H1 (cell line): ENCODE measurements at regions of chr1 and their contacts with region 1.

Region 1: DNA sequence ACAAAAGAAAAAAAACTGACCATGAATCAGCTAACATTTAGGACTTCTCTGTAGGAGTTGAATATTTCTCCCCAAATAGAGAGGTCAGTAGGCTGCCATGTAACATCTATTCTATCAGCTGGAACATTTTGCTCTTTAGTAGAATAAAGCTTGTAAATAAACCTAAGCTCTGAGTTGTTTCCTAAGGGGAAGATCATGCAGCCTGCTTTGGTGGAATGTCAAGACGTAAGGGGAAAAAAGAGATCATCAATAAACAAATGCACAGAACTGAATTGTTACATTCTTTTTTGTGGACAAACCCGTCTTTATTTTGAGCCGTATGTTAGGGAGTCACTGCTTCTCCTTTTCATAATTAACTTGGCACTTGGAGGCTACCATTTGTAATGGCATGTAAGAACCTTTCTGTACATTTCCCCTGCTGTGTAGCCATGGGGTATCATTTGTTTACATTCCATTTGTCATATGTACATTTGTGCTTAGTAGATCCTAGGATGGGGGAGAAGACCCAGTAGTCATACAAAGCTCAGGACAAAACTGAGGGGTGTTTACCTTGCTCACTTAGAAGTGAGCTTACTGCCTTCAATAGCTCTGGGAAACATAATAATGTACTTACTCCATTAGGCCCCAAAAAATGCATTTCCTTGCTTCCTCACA is 10.8 kb upstream of the PALMD start:
- DNase-seq: no peak
- H3K4me3 ChIP-seq: no peak overlapping the region
- H3K27ac ChIP-seq: no peak overlapping the region
- H3K4me1 ChIP-seq: peaks cover 0 to 2% (median 0%) of the 10 kb centered on the region in 4 experiments; a peak in 1 of 7 replicates
- H3K27me3 ChIP-seq: no peaks in the 10 kb centered on the region
- CTCF ChIP-seq: no peak
- EP300 ChIP-seq: no peak
- POLR2A ChIP-seq: no peak
- RAD21 ChIP-seq: no peak

Region 2: DNA sequence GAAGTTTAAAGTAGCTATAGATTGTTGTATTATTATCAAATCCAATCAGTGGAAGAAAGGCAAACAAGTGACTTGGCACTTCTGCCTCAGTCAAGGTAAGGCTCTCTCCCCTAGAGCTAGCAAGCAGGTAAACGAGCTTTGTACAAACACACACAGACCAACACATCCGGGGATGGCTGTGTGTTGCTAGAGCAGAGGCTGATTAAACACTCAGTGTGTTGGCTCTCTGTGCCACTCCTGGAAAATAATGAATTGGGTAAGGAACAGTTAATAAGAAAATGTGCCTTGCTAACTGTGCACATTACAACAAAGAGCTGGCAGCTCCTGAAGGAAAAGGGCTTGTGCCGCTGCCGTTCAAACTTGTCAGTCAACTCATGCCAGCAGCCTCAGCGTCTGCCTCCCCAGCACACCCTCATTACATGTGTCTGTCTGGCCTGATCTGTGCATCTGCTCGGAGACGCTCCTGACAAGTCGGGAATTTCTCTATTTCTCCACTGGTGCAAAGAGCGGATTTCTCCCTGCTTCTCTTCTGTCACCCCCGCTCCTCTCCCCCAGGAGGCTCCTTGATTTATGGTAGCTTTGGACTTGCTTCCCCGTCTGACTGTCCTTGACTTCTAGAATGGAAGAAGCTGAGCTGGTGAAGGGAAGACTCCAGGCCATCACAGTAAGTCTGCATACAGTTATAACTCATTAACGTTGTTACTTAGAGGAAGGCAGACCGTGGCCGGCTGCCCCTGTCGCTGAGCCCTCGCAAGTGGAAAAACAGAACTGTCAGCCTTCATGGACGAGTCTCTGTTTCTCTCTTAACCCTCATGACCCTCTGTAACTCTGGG is 10.8 kb after region 1 on chr1 and contains the start of gene PALMD:
- CTCF ChIA-PET with region 1: interaction called, 11 read pairs
- POLR2A ChIA-PET with region 1: no interaction called
- DNase-seq: no peak
- H3K4me3 ChIP-seq: no peak within 1 kb of the TSS; a peak in 1 of 8 replicates
- H3K27ac ChIP-seq: no peak within 1 kb of the TSS
- H3K4me1 ChIP-seq: peaks cover 5 to 19% (median 16%) of the 10 kb centered on the region in 4 experiments; a peak in 6 of 7 replicates
- H3K27me3 ChIP-seq: no peaks in the 10 kb centered on the region
- CTCF ChIP-seq: no peak
- EP300 ChIP-seq: no peak
- POLR2A ChIP-seq: no peak
- RAD21 ChIP-seq: no peak
- total RNA-seq, gene PALMD: not detected in 2 replicates